Heart left ventricle (tissue), 16 donors: ENCODE measurements at regions of chr1 and their contacts with region 1.

Region 1: GRCh38 chr1:183989078-183989577 is 48.4 kb downstream of the COLGALT2 start:
- DNase-seq: peak in 4 of 5 donors; percentile 39 to 63 (median 48)
- ATAC-seq: peak; percentile 49 to 87 (median 81)
- H3K4me3 ChIP-seq: no peak overlapping the region
- H3K27ac ChIP-seq: peak overlapping the region in 5 of 12 donors; percentile 0 to 61 (median 38)
- H3K4me1 ChIP-seq: peaks cover 0 to 49% (median 20%) of the 10 kb centered on the region in 12 donors
- H3K27me3 ChIP-seq: no peaks in the 10 kb centered on the region
- CTCF ChIP-seq: no peak
- POLR2A ChIP-seq: no peak

Region 2: DNA sequence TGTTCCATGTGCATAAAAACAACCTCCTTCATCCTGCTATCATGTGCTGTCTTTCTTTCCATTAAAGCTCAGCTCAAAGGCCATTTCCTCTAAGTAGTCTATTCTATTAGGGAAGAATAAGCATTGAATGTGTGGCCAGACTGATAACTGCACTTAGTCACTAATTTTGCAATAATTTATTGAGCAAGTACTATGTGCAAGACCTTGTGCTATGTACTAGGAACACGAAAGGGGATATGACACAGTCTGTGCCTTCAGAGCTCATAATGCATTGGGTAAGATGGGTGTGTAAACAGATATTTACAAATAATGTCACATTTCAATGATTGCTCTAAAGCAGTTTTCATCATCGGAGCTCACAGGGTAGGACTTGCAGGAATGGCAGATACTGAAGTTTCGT is 625.2 kb before region 1 on chr1:
- intact Hi-C with region 1: no loop called
- DNase-seq: no peak
- ATAC-seq: peak in 2 of 4 donors; percentile 33 to 74
- H3K4me3 ChIP-seq: no peak overlapping the region
- H3K27ac ChIP-seq: peak overlapping the region in 1 of 12 donors; percentile 53
- H3K4me1 ChIP-seq: peaks cover 0 to 26% (median 2%) of the 10 kb centered on the region in 12 donors
- H3K27me3 ChIP-seq: peaks cover 0 to 7% (median 0%) of the 10 kb centered on the region in 9 donors
- CTCF ChIP-seq: no peak
- POLR2A ChIP-seq: no peak

Region 3: GRCh38 chr1:184025242-184025675 is 36.1 kb after region 1 on chr1:
- intact Hi-C with region 1: loop called in 2 of 10 experiments (anchors 5 kb)
- DNase-seq: peak in 3 of 5 donors; percentile 30 to 38 (median 31)
- ATAC-seq: peak; percentile 39 to 64 (median 52)
- H3K4me3 ChIP-seq: no peak overlapping the region
- H3K27ac ChIP-seq: peak overlapping the region in 5 of 12 donors; percentile 5 to 63 (median 33)
- H3K4me1 ChIP-seq: peaks cover 0 to 73% (median 22%) of the 10 kb centered on the region in 12 donors
- H3K27me3 ChIP-seq: no peaks in the 10 kb centered on the region
- CTCF ChIP-seq: no peak
- POLR2A ChIP-seq: no peak